Activated naive CD4-positive, alpha-beta T cell treated with anti-CD3 and anti-CD28 coated beads for 36 hours (primary cell): ENCODE measurements at regions of chr3 and their contacts with region 1.

Region 1: GRCh38 chr3:12948891-12949711 is 107.7 kb upstream of the RPL32 start:
- DNase-seq: peak; percentile 62
- H3K4me3 Mint-ChIP-seq: no peak overlapping the region
- H3K27ac Mint-ChIP-seq: peak overlapping the region; percentile 69
- H3K4me1 Mint-ChIP-seq: peaks cover 50% of the 10 kb centered on the region
- H3K27me3 Mint-ChIP-seq: no peaks in the 10 kb centered on the region

Region 2: GRCh38 chr3:12967606-12968351 is 18.7 kb after region 1 on chr3:
- CTCF ChIA-PET with region 1: interaction called, 3 read pairs
- intact Hi-C with region 1: loop called (anchors 1 kb)
- DNase-seq: peak; percentile 89
- H3K4me3 Mint-ChIP-seq: peak overlapping the region; percentile 59
- H3K27ac Mint-ChIP-seq: no peak overlapping the region
- H3K4me1 Mint-ChIP-seq: peaks cover 51% of the 10 kb centered on the region
- H3K27me3 Mint-ChIP-seq: no peaks in the 10 kb centered on the region